Naive thymus-derived CD4-positive, alpha-beta T cell (primary cell): ENCODE measurements at regions of chr7 and their contacts with region 1.

Region 1: DNA sequence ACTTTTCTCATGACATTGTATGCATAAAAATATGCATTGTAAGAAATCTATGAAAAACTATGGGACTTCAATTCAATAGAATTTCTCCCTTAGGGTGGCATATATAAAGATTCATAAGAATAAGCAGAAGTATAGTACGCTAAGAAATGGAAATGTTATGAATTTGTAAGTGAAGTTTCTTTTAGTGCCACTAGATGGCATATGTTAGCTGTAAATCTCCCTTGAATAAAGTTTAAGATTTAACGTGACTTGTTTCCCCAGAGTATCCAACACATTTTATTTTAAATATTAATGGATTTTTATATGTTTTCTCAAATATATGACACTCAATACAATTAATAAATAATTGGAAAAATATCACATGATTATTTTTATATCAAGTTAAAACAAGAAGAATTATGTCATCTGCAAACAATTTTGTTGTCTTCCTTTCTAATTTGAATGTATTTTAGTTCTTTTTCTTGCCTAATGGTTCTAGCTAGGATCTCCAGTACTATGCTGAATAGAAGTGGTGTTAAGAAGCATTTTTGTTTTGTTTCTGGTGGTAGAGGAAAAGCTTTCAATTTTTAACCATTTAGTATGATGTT is 287.2 kb downstream of the HGF start:
- DNase-seq: peak in 1 of 9 donors; percentile 1
- ATAC-seq: no peak
- H3K4me3 ChIP-seq: no peak overlapping the region
- H3K4me3 Mint-ChIP-seq: no peak overlapping the region
- H3K27ac ChIP-seq: no peak overlapping the region
- H3K27ac Mint-ChIP-seq: no peak overlapping the region
- H3K4me1 ChIP-seq: no peaks in the 10 kb centered on the region
- H3K4me1 Mint-ChIP-seq: peaks cover 0 to 1% (median 0%) of the 10 kb centered on the region in 7 donors
- H3K27me3 ChIP-seq: no peaks in the 10 kb centered on the region
- H3K27me3 Mint-ChIP-seq: no peaks in the 10 kb centered on the region

Region 2: GRCh38 chr7:81333004-81333403 is 149.7 kb before region 1 on chr7:
- CTCF ChIA-PET with region 1: no interaction called
- POLR2A ChIA-PET with region 1: no interaction called
- intact Hi-C with region 1: no loop called
- DNase-seq: no peak
- ATAC-seq: no peak
- H3K4me3 ChIP-seq: no peak overlapping the region
- H3K4me3 Mint-ChIP-seq: no peak overlapping the region
- H3K27ac ChIP-seq: no peak overlapping the region
- H3K27ac Mint-ChIP-seq: no peak overlapping the region
- H3K4me1 ChIP-seq: no peaks in the 10 kb centered on the region
- H3K4me1 Mint-ChIP-seq: no peaks in the 10 kb centered on the region
- H3K27me3 ChIP-seq: no peaks in the 10 kb centered on the region
- H3K27me3 Mint-ChIP-seq: no peaks in the 10 kb centered on the region

Region 3: GRCh38 chr7:81410471-81411125 is 72.1 kb before region 1 on chr7:
- CTCF ChIA-PET with region 1: no interaction called
- POLR2A ChIA-PET with region 1: no interaction called
- intact Hi-C with region 1: no loop called
- DNase-seq: no peak
- ATAC-seq: no peak
- H3K4me3 ChIP-seq: no peak overlapping the region
- H3K4me3 Mint-ChIP-seq: no peak overlapping the region
- H3K27ac ChIP-seq: no peak overlapping the region
- H3K27ac Mint-ChIP-seq: no peak overlapping the region
- H3K4me1 ChIP-seq: no peaks in the 10 kb centered on the region
- H3K4me1 Mint-ChIP-seq: no peaks in the 10 kb centered on the region
- H3K27me3 ChIP-seq: no peaks in the 10 kb centered on the region
- H3K27me3 Mint-ChIP-seq: no peaks in the 10 kb centered on the region

Region 4: DNA sequence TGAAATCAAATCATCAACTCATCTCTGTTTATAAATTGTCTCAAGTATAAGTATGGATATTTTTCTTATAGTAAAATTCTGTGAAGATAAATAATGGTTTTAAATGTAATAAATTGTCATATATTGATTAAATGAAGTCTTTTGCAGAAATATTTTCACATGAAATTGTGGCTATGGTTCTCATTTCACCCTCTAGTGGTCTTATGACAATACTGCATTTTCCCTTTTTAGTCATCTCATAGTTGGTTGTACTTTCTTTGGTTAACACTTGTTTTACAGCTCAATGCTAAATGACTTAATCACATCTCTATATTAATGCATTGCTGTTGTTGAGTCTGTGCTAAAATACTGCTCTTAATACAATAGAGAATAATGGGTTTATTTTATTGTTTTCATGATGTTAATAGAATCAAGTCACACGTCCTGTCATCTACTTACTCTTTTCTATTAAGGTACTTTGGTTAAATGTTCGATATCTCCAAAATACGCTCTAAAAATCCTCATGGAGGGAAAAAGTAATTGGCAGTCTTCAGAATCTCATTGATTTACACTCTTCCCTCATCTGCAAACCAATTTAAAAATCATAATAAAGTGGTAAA is 998.9 kb after region 1 on chr7:
- CTCF ChIA-PET with region 1: no interaction called
- POLR2A ChIA-PET with region 1: no interaction called
- intact Hi-C with region 1: loop called in 1 of 2 experiments (anchors 5 kb)
- DNase-seq: no peak
- ATAC-seq: no peak
- H3K4me3 ChIP-seq: no peak overlapping the region
- H3K4me3 Mint-ChIP-seq: no peak overlapping the region
- H3K27ac ChIP-seq: no peak overlapping the region
- H3K27ac Mint-ChIP-seq: no peak overlapping the region
- H3K4me1 ChIP-seq: no peaks in the 10 kb centered on the region
- H3K4me1 Mint-ChIP-seq: no peaks in the 10 kb centered on the region
- H3K27me3 ChIP-seq: no peaks in the 10 kb centered on the region
- H3K27me3 Mint-ChIP-seq: no peaks in the 10 kb centered on the region